OCI-LY7 (cell line): ENCODE measurements at regions of chr16 and their contacts with region 1.

Region 1: GRCh38 chr16:30557957-30558788 is at the start of gene ZNF764:
- DNase-seq: peak; percentile 98
- H3K4me3 ChIP-seq: peak within 1 kb of the TSS; percentile 77
- H3K27ac ChIP-seq: peak within 1 kb of the TSS; percentile 77
- H3K4me1 ChIP-seq: peaks cover 11% of the 10 kb centered on the region
- CTCF ChIP-seq: peak; percentile 50
- total RNA-seq, gene ZNF764: 10.5 and 14.6 TPM in 2 replicates

Region 2: DNA sequence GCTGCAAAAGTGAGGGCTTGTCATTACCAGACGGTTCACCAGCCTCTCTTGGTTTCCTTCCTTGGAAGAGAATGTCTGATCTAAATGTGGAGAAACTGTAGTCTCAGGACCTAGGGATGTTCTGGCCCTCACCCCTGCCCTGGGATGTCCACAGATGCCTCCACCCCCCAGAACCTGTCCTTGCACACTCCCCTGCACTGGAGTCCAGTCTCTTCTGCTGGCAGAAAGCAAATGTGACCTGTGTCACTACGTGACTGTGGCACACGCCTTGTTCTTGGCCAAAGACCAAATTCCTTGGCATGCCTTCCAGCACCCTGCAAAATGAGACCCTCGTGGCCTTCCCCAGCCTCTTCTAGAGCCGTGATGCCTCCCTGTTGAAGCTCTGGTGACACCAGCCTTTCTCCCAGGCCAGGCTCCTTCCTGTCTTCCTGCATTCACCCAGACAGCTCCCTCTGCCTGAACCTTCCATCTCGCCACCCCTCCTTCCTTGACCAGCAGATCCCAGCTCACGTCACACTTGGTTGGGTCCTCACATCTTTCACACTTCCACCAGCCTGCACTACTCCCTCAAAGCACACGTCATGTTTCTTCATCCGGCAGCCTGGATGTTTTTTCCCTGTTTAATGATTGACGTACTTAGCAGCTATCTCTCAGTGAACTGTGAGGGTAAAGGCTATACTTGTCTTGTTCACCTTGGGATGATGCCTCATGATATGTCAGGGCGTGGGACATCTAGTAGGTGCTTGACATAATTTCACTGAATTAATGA is 36.1 kb before region 1 on chr16:
- CTCF ChIA-PET with region 1: no interaction called
- POLR2A ChIA-PET with region 1: no interaction called
- intact Hi-C with region 1: no loop called
- DNase-seq: no peak
- H3K4me3 ChIP-seq: no peak overlapping the region
- H3K27ac ChIP-seq: no peak overlapping the region
- H3K4me1 ChIP-seq: peaks cover 6% of the 10 kb centered on the region
- CTCF ChIP-seq: no peak

Region 3: GRCh38 chr16:30546115-30546514 is 12.1 kb before region 1 on chr16:
- CTCF ChIA-PET with region 1: no interaction called
- POLR2A ChIA-PET with region 1: no interaction called
- intact Hi-C with region 1: no loop called
- DNase-seq: no peak
- H3K4me3 ChIP-seq: no peak overlapping the region
- H3K27ac ChIP-seq: no peak overlapping the region
- H3K4me1 ChIP-seq: no peaks in the 10 kb centered on the region
- CTCF ChIP-seq: no peak

Region 4: GRCh38 chr16:30571695-30572600 is 13.8 kb after region 1 on chr16 and contains the start of gene ZNF688:
- CTCF ChIA-PET with region 1: interaction called, 3 read pairs
- POLR2A ChIA-PET with region 1: interaction called, 31 read pairs
- intact Hi-C with region 1: loop called (anchors 1 kb)
- DNase-seq: peak; percentile 98
- H3K4me3 ChIP-seq: peak within 1 kb of the TSS; percentile 79
- H3K27ac ChIP-seq: peak within 1 kb of the TSS; percentile 79
- H3K4me1 ChIP-seq: peaks cover 30% of the 10 kb centered on the region
- CTCF ChIP-seq: no peak
- total RNA-seq, gene ZNF688: 17.5 and 19.8 TPM in 2 replicates